ENCODE measurements at regions of chr12 and their contacts with region 1.

Region 1: GRCh38 chr12:122225683-122226407 is at the start of gene DIABLO:
- DNase-seq: peak; percentile 100
- ATAC-seq: peak; percentile 97
- H3K4me3 Mint-ChIP-seq: peak within 1 kb of the TSS; percentile 87
- H3K27ac Mint-ChIP-seq: peak within 1 kb of the TSS; percentile 91
- H3K4me1 Mint-ChIP-seq: peaks cover 37% of the 10 kb centered on the region
- H3K27me3 Mint-ChIP-seq: no peaks in the 10 kb centered on the region
- CTCF ChIP-seq: no peak
- total RNA-seq, gene DIABLO: 50.5 to 55.2 TPM

Region 2: DNA sequence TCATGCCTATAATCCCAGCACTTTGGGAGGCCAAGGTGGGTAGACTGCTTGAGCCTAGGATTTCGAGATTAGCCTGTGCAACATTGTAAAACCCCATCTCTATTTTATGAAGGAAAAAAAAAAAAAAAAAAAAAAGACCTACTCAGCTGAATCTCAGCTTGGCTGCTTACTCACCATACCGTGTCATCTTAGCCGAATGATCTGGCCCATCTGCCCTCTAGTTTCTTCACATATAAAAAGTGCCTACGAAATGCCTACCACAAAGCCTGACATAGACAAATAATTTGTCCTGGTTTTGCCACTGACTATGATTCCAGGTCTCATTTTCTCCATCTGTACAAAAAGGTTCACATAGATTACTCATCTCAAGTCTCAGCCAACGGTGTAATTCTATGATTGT is 10.1 kb before region 1 on chr12:
- CTCF ChIA-PET with region 1: interaction called, 5 read pairs
- POLR2A ChIA-PET with region 1: interaction called, 17 read pairs
- intact Hi-C with region 1: no loop called
- DNase-seq: no peak
- ATAC-seq: no peak
- H3K4me3 Mint-ChIP-seq: no peak overlapping the region
- H3K27ac Mint-ChIP-seq: no peak overlapping the region
- H3K4me1 Mint-ChIP-seq: peaks cover 2% of the 10 kb centered on the region
- H3K27me3 Mint-ChIP-seq: no peaks in the 10 kb centered on the region
- CTCF ChIP-seq: no peak